Activated CD8-positive, alpha-beta memory T cell treated with anti-CD3 and anti-CD28 coated beads, Interleukin-2, amount 10 ng/mL, durations not matched to agents 7 days and 5 days (primary cell): ENCODE measurements at regions of chr12 and their contacts with region 1.

Region 1: DNA sequence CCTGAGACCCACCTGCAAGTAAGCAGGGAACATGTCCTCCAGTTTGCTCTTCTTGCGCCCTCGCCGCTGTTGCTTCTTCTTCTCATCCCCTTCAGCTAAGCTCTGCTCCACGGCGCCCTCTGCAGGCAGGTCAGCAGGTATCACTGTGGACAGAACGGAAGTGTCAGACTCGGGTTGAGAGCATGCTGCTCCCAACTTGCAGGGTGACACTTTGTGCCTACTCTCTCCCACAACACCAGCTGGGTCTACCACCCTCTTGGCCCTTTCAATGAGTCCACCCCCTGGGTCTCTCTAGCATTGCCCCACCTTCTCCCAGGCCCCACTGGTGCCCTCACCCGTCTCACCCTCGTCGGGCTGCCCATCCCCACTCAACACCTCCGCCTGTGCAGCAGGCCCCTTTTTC is 16.7 kb downstream of the KMT2D start:
- DNase-seq: peak; percentile 87
- ATAC-seq: peak; percentile 87
- H3K4me3 Mint-ChIP-seq: no peak overlapping the region
- H3K27ac Mint-ChIP-seq: peak overlapping the region; percentile 0
- H3K4me1 Mint-ChIP-seq: peaks cover 8% of the 10 kb centered on the region
- H3K27me3 Mint-ChIP-seq: no peaks in the 10 kb centered on the region

Region 2: DNA sequence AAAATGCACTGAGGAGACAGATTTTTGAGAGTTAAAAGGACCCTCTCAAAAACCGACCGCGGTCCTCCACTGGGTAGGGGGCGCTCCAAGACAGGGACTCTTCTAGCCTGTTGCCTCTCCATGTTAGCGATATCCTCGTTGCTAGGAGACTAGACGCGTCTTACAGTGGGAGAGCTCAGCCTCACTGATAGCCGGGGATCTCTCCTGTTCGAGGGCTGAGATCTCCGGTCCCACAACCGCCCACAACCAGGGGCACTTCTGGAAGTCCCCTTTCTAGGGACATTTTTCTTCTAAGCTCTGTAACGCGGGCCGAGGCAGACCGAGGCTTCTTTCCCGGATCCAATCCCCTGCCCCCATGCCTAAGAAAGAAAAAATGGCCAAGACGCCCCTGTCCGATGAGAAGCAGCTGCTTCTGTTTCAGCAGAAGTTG is 139.9 kb before region 1 on chr12:
- CTCF ChIA-PET with region 1: no interaction called
- DNase-seq: peak; percentile 88
- ATAC-seq: peak; percentile 91
- H3K4me3 Mint-ChIP-seq: peak overlapping the region; percentile 38
- H3K27ac Mint-ChIP-seq: peak overlapping the region; percentile 68
- H3K4me1 Mint-ChIP-seq: peaks cover 19% of the 10 kb centered on the region
- H3K27me3 Mint-ChIP-seq: peaks cover 9% of the 10 kb centered on the region

Region 3: DNA sequence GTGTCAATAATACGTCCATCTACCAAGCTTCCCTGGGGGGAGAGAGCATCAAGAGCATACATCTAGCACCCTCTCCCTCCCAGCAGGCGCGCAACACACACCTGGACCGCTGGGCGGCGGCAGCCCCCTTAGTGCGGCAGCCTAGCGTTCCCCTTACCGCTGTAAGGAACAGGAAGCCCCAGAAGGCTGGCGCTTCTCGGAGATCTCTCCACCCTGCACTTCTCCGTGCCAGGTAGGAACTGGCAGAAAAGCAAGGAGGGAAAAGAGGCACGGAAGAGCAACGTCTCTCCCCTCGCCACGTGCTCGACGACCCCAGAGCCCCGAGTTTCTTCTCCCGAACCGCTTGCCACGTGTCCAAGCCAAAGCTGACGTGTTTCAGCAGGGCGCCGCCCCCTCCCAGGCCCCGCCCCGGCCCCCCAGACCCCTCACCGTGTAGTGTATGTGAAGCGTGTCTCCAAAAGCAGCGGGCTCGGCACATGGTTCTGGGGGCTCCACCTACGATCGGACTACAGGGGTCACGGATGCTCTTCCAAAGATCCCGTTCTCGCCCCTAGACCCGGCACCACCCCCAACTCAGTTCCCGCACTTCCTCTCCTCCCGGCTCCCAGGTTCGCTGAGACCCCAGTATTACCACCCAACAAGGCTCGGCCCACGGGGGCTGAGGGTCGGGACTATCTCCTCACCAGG is 119.1 kb before region 1 on chr12:
- CTCF ChIA-PET with region 1: no interaction called
- DNase-seq: peak; percentile 83
- ATAC-seq: peak; percentile 74
- H3K4me3 Mint-ChIP-seq: peak overlapping the region; percentile 92
- H3K27ac Mint-ChIP-seq: peak overlapping the region; percentile 95
- H3K4me1 Mint-ChIP-seq: peaks cover 43% of the 10 kb centered on the region
- H3K27me3 Mint-ChIP-seq: no peaks in the 10 kb centered on the region

Region 4: GRCh38 chr12:48995061-48995879 is 48.6 kb before region 1 on chr12:
- CTCF ChIA-PET with region 1: interaction called, 25 read pairs
- DNase-seq: peak; percentile 65
- ATAC-seq: peak; percentile 44
- H3K4me3 Mint-ChIP-seq: no peak overlapping the region
- H3K27ac Mint-ChIP-seq: no peak overlapping the region
- H3K4me1 Mint-ChIP-seq: peaks cover 33% of the 10 kb centered on the region
- H3K27me3 Mint-ChIP-seq: peaks cover 60% of the 10 kb centered on the region

Region 5: DNA sequence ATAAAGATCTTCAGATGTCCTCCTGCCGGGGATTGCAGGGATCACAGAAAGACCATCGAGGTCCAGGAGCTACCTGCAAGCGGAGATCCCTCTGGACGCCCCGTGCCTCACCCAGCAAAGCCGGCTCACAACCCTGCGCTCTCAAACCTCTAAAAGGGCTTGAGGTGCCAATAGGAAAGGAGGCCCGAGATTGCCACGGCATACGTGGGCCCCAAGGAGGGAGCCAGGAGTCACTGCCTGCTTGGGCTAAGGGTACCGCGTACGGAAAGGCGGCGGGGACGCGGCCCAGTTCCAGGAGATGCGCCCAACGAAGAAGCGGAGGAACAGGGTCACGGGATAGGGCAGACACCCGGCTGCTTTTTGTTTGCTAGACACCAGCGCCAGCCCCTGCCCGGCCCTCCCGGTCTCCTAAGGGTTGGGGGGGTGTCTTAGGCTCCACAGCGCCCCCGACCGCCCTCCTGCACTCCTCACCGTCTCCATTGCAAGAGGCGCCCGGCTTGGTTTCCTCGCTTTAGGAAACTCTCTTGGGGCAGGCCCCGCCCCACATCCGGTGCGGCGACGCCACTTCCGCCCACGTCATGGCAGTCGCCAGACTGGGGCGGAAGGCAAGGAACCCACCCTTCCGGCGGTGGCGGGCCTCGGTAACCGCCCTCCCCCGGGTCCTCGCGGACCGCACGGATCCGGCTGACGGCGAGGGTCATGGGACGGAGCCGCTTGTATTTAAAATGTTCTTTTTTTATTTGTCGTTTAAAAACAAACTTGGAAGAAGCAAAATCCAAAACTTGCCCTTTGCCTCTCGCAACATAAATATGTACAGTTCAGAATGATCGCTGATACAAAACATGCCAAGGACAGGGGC is 25.4 kb before region 1 on chr12 and contains the start of gene PRKAG1:
- CTCF ChIA-PET with region 1: interaction called, 14 read pairs
- DNase-seq: peak; percentile 98
- ATAC-seq: peak; percentile 92
- H3K4me3 Mint-ChIP-seq: peak within 1 kb of the TSS; percentile 86
- H3K27ac Mint-ChIP-seq: peak within 1 kb of the TSS; percentile 97
- H3K4me1 Mint-ChIP-seq: peaks cover 28% of the 10 kb centered on the region
- H3K27me3 Mint-ChIP-seq: no peaks in the 10 kb centered on the region
- total RNA-seq, gene PRKAG1: 58.9 to 66.0 TPM

Region 6: GRCh38 chr12:49031553-49032162 is 12.2 kb before region 1 on chr12:
- CTCF ChIA-PET with region 1: interaction called, 24 read pairs
- DNase-seq: no peak
- ATAC-seq: no peak
- H3K4me3 Mint-ChIP-seq: no peak overlapping the region
- H3K27ac Mint-ChIP-seq: no peak overlapping the region
- H3K4me1 Mint-ChIP-seq: no peaks in the 10 kb centered on the region
- H3K27me3 Mint-ChIP-seq: no peaks in the 10 kb centered on the region

Region 7: DNA sequence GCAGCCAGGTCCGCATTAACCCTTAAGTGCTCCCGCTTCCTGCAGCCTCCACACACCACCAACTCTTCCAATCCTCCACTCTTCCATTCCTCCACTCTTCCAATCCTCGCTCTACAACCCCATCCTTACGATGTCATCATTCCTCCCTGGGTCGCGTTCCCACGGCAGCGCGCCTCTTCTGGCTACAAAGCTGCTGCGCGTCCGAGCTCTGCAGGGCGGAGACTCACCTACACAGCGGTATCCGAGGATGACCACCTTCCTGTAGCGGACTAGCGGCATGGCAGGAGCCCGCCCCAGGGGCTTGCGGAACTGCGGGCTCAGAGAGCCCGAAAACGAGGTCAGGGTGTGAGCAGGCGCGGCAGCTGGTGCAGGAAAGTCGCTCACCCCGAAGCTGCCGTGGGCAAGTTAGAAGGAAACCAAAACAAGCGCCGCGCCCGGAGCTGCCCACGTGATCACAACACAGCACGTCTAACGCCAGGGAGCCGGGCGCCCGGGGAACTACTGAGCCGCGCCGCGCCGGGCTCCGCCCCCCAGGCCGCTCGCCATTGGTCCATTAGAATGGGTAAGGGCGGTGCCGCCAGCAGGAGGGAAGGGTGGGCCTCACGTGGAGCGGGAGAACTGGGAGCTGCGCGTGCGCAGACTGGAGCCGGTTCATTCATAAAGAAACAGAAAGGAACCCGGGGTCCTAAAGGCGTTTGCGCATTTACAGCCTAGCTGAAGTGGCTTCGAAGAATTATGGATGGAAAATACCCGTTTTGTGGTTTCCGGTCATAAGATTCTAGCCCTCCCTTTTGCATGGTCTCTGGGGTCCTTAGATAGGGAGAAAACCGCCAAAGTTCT is 25.9 kb after region 1 on chr12 and contains the start of gene RHEBL1:
- CTCF ChIA-PET with region 1: interaction called, 13 read pairs
- DNase-seq: peak; percentile 100
- ATAC-seq: peak; percentile 99
- H3K4me3 Mint-ChIP-seq: peak within 1 kb of the TSS; percentile 87
- H3K27ac Mint-ChIP-seq: peak within 1 kb of the TSS; percentile 92
- H3K4me1 Mint-ChIP-seq: peaks cover 29% of the 10 kb centered on the region
- H3K27me3 Mint-ChIP-seq: no peaks in the 10 kb centered on the region
- total RNA-seq, gene RHEBL1: 14.9 to 15.1 TPM